ENCODE measurements at regions of chr7 and their contacts with region 1.

Region 1: GRCh38 chr7:75762314-75762917 is 9.6 kb downstream of the CCL26 start:
- DNase-seq: no peak
- ATAC-seq: peak; percentile 85
- H3K4me3 Mint-ChIP-seq: no peak overlapping the region
- H3K27ac Mint-ChIP-seq: no peak overlapping the region
- H3K4me1 Mint-ChIP-seq: no peaks in the 10 kb centered on the region
- H3K27me3 Mint-ChIP-seq: no peaks in the 10 kb centered on the region
- CTCF ChIP-seq: peak; percentile 61

Region 2: DNA sequence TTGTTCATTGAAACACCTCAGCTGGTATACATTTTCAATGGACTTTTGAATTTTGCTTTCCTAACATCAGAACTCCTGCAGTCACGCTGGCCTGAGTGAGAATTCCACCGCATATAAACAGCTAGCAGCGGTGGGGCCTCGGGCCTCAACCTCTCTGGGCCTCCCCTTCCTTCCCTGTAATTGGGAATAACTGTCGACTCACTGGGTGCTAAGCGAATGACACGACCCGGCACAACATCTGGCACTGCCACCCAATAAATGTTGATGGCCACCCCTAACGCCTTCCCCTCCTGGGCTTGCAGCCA is 689.5 kb before region 1 on chr7:
- CTCF ChIA-PET with region 1: no interaction called
- POLR2A ChIA-PET with region 1: no interaction called
- intact Hi-C with region 1: loop called (anchors 10 kb)
- DNase-seq: no peak
- ATAC-seq: no peak
- H3K4me3 Mint-ChIP-seq: peak overlapping the region; percentile 84
- H3K27ac Mint-ChIP-seq: peak overlapping the region; percentile 93
- H3K4me1 Mint-ChIP-seq: peaks cover 10% of the 10 kb centered on the region
- H3K27me3 Mint-ChIP-seq: no peaks in the 10 kb centered on the region
- CTCF ChIP-seq: no peak

Region 3: DNA sequence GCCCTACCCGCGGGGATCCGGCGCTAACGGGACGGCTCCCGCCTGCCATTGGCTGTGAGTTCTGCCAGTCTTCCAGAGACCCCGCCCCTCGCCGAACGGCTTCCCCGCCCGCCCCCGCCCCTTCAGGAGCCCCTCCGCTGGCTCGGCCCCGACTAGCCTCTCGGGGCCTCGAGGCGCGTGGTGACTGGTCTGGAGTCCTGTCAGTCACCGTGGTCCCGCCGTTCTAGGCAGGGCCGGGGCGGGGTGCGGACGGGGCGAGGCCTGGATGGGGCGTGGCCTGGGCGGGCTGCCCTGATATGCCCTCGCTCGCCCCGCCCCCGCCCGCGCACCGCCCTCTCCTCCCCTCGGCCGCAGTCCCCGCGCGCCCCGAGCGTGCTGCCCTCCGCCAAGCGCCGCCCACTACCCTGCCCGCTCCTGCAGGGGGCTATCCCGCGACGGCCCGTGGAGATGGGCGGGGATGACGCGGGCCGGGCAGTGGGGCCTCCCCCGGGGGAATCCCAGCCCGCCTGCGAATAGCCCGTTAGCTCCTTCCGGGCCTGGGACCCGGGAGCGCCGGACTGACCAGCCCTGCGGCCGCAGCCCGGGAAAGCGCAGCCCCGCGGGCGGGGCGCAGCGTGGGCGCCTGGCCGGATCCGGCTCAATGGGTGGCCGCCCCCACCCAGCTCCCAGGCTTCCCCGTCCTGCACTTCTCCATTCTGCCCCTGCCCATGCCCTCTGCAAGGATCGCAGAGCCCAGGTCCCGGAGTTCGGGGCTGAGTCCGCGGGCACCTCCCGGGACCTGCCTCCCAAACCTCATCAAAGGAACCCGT is 23.2 kb before region 1 on chr7:
- CTCF ChIA-PET with region 1: interaction called, 11 read pairs
- POLR2A ChIA-PET with region 1: no interaction called
- intact Hi-C with region 1: no loop called
- DNase-seq: peak; percentile 99
- ATAC-seq: peak; percentile 98
- H3K4me3 Mint-ChIP-seq: peak overlapping the region; percentile 88
- H3K27ac Mint-ChIP-seq: peak overlapping the region; percentile 96
- H3K4me1 Mint-ChIP-seq: peaks cover 16% of the 10 kb centered on the region
- H3K27me3 Mint-ChIP-seq: peaks cover 4% of the 10 kb centered on the region
- CTCF ChIP-seq: no peak

Region 4: GRCh38 chr7:75776295-75776971 is 14.0 kb after region 1 on chr7:
- CTCF ChIA-PET with region 1: interaction called, 15 read pairs
- POLR2A ChIA-PET with region 1: no interaction called
- intact Hi-C with region 1: no loop called
- DNase-seq: peak; percentile 86
- ATAC-seq: peak; percentile 91
- H3K4me3 Mint-ChIP-seq: peak overlapping the region; percentile 46
- H3K27ac Mint-ChIP-seq: peak overlapping the region; percentile 85
- H3K4me1 Mint-ChIP-seq: peaks cover 38% of the 10 kb centered on the region
- H3K27me3 Mint-ChIP-seq: peaks cover 16% of the 10 kb centered on the region
- CTCF ChIP-seq: no peak